ENCODE measurements at regions of chr15 and their contacts with region 1.

Region 1: DNA sequence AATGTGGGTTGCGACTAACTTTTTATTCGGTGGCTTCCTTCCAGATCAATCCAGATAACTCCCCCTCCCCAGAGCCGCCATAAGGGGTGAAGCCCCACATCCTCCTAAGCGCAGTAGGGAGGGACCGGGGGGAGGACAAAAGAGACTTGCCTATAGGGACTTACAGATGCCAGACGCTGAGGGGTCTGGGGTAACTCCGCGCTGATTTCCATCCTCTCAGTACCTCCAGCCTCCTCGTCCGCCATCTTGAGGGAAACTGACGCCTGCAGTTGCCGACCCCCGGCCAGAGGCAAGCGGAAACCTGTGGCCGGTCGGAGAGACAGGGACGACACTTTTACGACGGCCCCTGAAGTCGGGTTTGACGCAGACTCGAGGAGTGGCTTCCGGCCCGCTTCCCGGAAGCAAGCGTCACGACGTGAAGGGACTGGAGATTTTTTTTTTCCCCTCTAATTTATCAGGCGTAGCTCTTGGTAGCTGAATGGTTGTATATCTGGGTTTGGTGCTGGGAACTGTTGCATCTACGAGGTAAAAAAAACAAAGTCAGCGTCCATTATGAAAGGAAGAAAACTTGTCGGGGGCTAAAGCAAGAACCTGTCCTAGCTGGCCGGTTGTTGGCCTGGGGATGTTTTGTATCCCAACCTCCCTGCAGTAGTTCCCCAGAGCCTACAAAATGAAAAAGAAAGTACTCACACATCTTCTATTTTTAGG is at the start of gene UBR1:
- DNase-seq: peak; percentile 87
- H3K4me3 ChIP-seq: peak within 1 kb of the TSS; percentile 74 to 82 (median 77)
- H3K27ac ChIP-seq: peak within 1 kb of the TSS; percentile 80
- H3K4me1 ChIP-seq: peaks cover 27% of the 10 kb centered on the region
- H3K27me3 ChIP-seq: no peaks in the 10 kb centered on the region
- CTCF ChIP-seq: no peak
- total RNA-seq, gene UBR1: 32.5 to 45.8 TPM

Region 2: DNA sequence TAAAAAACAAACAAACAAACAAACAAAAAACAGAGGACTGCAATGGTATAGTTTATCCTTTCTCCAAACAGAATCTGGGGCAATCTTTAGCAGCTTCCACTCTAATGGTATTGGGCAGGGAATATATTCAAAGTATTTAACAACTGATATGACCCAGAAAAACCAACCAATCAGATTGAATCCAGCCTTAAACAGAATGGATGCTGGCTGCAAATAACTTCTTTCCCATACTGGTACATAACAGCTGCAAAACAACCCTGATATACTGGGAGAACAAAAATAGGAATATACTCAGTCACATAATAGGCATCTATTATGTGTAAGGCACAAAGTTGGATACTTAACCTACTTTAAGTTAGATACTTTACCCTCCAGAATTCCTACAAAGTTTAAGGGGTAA is 49.2 kb before region 1 on chr15:
- CTCF ChIA-PET with region 1: no interaction called
- dilution Hi-C with region 1: no loop called
- in situ Hi-C with region 1: no loop called
- intact Hi-C with region 1: no loop called
- DNase-seq: no peak
- H3K4me3 ChIP-seq: no peak overlapping the region
- H3K27ac ChIP-seq: no peak overlapping the region
- H3K4me1 ChIP-seq: no peaks in the 10 kb centered on the region
- H3K27me3 ChIP-seq: no peaks in the 10 kb centered on the region
- CTCF ChIP-seq: no peak

Region 3: GRCh38 chr15:43133430-43134156 is 27.7 kb after region 1 on chr15 and contains the start of gene TMEM62:
- CTCF ChIA-PET with region 1: no interaction called
- dilution Hi-C with region 1: no loop called
- in situ Hi-C with region 1: no loop called
- intact Hi-C with region 1: loop called (anchors 1 kb)
- DNase-seq: peak; percentile 82
- H3K4me3 ChIP-seq: peak within 1 kb of the TSS; percentile 35 to 78 (median 66)
- H3K27ac ChIP-seq: peak within 1 kb of the TSS; percentile 74
- H3K4me1 ChIP-seq: peaks cover 9% of the 10 kb centered on the region
- H3K27me3 ChIP-seq: no peaks in the 10 kb centered on the region
- CTCF ChIP-seq: peak in 1 of 2 donors; percentile 0
- total RNA-seq, gene TMEM62: 13.3 to 14.8 TPM

Region 4: DNA sequence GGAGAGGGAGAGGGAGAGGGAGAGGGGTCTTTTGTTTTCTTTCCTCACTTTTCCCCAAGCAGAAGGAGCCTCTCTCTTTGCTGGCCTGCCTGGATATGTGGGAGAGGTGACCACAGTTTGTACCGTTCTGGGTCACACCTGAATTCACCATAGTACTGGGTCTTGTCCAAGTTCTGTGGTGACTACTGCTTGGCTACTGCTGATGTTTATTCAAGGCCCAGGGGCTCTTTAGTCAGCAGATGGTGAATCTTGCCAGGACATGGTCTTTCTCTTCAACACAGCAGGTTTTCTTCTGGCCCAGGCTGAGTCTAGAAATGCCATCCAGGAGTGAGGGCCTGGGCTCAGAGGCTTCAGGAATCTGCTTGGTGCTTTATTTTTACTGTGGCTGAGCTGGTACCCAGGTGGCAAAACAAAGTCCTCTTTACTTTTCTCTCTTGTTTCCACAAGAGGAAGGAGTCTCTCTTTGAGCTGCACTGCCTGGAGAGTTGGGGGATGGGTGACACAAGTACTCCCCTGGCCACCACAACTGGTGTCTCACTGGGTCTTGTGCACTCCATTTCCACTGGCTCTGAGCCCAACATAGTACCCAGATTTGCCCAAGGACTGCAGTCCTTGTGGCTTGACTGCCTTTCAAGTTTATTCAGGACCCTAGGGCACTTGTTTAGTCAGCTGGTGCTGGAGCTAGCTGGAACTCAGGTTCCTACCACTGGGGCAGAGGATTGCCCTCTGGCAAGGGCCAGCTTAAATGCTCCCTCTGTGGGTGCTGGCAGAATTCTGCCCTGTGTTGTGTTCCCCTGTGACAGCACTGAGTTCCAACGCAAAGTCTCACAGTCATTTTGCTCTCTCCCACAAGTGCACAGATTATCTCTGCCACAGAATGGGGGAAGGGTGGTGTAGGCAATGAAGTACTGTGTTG is 62.5 kb after region 1 on chr15:
- CTCF ChIA-PET with region 1: no interaction called
- dilution Hi-C with region 1: no loop called
- in situ Hi-C with region 1: no loop called
- intact Hi-C with region 1: loop called (anchors 5 kb)
- DNase-seq: peak; percentile 95
- H3K4me3 ChIP-seq: no peak overlapping the region
- H3K27ac ChIP-seq: peak overlapping the region; percentile 59
- H3K4me1 ChIP-seq: peaks cover 24% of the 10 kb centered on the region
- H3K27me3 ChIP-seq: no peaks in the 10 kb centered on the region
- CTCF ChIP-seq: peak in 1 of 2 donors; percentile 16

Region 5: DNA sequence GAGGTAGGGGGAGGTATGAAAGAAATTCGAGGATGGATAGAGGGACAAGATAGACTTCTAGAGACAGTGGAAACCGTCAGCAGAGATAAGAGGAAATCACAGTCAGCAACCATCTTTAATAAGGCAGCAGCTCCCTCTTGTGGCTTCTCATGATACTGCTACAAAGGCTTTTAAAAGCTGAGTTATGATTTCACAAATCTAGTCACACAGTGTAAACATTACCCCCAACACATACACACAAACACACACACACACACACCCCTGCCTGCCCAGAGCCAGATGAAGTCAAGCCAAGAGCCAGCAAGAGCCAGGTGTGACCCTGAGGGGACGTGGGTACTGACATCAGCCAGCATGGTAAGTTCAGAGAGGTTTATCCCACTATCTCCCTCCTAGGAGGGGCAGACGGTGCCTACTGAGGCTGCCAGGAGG is 179.7 kb after region 1 on chr15:
- CTCF ChIA-PET with region 1: no interaction called
- dilution Hi-C with region 1: no loop called
- in situ Hi-C with region 1: no loop called
- intact Hi-C with region 1: loop called (anchors 10 kb)
- DNase-seq: peak; percentile 46
- H3K4me3 ChIP-seq: no peak overlapping the region
- H3K27ac ChIP-seq: no peak overlapping the region
- H3K4me1 ChIP-seq: no peaks in the 10 kb centered on the region
- H3K27me3 ChIP-seq: no peaks in the 10 kb centered on the region
- CTCF ChIP-seq: peak; percentile 78 to 88